GM13976 (cell line): ENCODE measurements at regions of chr12 and their contacts with region 1.

Region 1: DNA sequence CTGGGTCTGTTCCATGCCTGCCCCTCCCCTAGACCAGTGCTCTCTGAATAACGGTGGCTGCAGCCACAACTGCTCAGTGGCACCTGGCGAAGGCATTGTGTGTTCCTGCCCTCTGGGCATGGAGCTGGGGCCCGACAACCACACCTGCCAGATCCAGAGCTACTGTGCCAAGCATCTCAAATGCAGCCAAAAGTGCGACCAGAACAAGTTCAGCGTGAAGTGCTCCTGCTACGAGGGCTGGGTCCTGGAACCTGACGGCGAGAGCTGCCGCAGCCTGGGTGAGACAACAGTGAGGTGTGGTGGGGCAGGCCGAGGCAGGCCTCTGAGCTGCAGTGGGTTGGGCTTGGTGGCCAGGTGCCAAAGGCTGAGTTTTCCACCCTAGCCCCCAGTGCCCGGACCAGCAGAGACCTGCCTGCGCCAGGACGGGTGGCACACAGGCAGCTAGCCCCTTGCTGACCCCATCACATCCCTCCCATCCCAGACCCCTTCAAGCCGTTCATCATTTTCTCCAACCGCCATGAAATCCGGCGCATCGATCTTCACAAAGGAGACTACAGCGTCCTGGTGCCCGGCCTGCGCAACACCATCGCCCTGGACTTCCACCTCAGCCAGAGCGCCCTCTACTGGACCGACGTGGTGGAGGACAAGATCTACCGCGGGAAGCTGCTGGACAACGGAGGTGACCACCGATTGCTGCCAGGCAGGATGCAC is 28.2 kb upstream of the LRP1-AS start:
- DNase-seq: peak; percentile 77
- CTCF ChIP-seq: peak; percentile 72

Region 2: DNA sequence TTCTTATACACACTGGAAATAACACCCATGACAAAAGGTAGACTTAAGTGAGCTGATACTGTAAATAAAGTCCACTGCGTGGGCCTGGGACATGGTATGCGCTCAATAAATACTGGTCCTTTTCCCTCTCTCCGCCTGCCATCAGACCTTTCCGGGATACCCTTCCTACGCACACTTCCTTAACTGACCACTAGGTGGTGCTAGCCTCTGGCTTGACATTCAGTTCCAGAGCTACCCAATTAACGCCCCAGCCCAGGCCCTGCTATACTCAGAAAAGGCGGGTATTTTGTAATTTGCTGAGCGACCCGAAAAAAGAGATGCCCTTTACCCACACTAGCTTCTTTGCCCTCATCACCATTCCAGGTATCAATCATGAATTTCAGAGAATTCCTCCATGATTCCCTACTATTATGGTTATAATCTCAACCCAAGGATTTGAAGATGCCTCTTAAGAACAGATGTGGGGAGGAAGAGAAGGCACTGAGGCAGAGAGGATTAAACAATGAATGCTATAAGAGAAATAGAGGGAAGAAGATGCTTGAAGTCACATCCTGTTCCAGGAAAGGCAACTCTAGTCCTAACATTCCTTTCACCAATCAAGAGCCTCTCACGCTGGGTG is 51.2 kb before region 1 on chr12:
- in situ Hi-C with region 1: loop called (anchors 5 kb)
- DNase-seq: peak; percentile 78
- CTCF ChIP-seq: peak; percentile 94